HAP-1 (cell line): ENCODE measurements at regions of chr5 and their contacts with region 1.

Region 1: GRCh38 chr5:129767906-129768380 is 20.0 kb downstream of the MINAR2 start:
- DNase-seq: peak; percentile 80 to 88
- H3K4me3 ChIP-seq: no peak overlapping the region
- H3K4me1 ChIP-seq: no peaks in the 10 kb centered on the region
- H3K27me3 ChIP-seq: no peaks in the 10 kb centered on the region; the same call in 1 of the 2 replicates

Region 2: GRCh38 chr5:129113871-129114270 is 654.1 kb before region 1 on chr5:
- in situ Hi-C with region 1: no loop called
- DNase-seq: no peak
- H3K4me3 ChIP-seq: no peak overlapping the region
- H3K4me1 ChIP-seq: no peaks in the 10 kb centered on the region; the same call in 1 of the 2 replicates
- H3K27me3 ChIP-seq: no peaks in the 10 kb centered on the region

Region 3: DNA sequence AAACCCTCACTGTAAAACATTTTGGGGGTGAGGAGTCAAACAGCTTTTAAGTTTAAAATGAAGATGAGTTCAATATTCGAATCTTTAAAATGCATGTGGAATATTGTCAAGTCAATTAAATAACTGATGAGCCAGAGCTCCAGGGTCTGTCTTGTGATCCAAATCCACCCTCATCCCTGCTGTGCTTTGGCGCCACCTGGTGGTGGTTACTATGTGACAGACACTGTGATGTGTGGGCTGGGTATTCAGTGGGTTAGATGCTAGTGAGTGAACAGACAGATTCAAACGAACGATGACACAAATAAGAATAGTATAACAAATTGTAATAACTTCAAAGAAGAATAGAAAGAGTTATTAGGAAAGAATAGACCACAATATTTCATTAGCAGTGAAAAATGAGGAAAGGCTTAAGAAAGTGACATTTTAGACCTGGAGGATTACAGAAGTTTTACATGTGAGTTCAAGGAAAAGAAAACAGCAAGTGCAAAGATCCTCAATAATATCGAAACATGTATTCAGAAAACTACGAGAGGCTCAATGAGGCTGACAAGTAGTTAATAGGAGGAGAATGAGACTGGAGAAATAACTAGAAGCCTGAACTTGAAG is 84.9 kb after region 1 on chr5:
- in situ Hi-C with region 1: loop called (anchors 5 kb)
- DNase-seq: peak; percentile 24 to 87
- H3K4me3 ChIP-seq: no peak overlapping the region
- H3K4me1 ChIP-seq: no peaks in the 10 kb centered on the region
- H3K27me3 ChIP-seq: no peaks in the 10 kb centered on the region

Region 4: GRCh38 chr5:130514984-130515690 is 747.2 kb after region 1 on chr5:
- in situ Hi-C with region 1: no loop called
- DNase-seq: no peak
- H3K4me3 ChIP-seq: no peak overlapping the region
- H3K4me1 ChIP-seq: no peaks in the 10 kb centered on the region
- H3K27me3 ChIP-seq: no peaks in the 10 kb centered on the region